Pancreas (tissue), 10 donors: ENCODE measurements at regions of chr7 and their contacts with region 1.

Region 1: GRCh38 chr7:48089046-48090003 is at the start of gene UPP1:
- DNase-seq: peak in 4 of 6 donors; percentile 57 to 95 (median 84)
- ATAC-seq: peak; percentile 41 to 88 (median 87)
- H3K4me3 ChIP-seq: peak within 1 kb of the TSS; percentile 42 to 90 (median 80)
- H3K27ac ChIP-seq: peak within 1 kb of the TSS; percentile 88 to 99 (median 96)
- H3K4me1 ChIP-seq: peaks cover 2 to 16% (median 6%) of the 10 kb centered on the region in 3 donors
- H3K27me3 ChIP-seq: no peaks in the 10 kb centered on the region
- CTCF ChIP-seq: no peak
- total RNA-seq, gene UPP1: 2.6 to 13.6 (median 7.4) TPM

Region 2: GRCh38 chr7:47833211-47833610 is 256.1 kb before region 1 on chr7:
- intact Hi-C with region 1: no loop called
- DNase-seq: no peak
- ATAC-seq: no peak
- H3K4me3 ChIP-seq: no peak overlapping the region
- H3K27ac ChIP-seq: no peak overlapping the region
- H3K4me1 ChIP-seq: no peaks in the 10 kb centered on the region
- H3K27me3 ChIP-seq: no peaks in the 10 kb centered on the region
- CTCF ChIP-seq: no peak

Region 3: DNA sequence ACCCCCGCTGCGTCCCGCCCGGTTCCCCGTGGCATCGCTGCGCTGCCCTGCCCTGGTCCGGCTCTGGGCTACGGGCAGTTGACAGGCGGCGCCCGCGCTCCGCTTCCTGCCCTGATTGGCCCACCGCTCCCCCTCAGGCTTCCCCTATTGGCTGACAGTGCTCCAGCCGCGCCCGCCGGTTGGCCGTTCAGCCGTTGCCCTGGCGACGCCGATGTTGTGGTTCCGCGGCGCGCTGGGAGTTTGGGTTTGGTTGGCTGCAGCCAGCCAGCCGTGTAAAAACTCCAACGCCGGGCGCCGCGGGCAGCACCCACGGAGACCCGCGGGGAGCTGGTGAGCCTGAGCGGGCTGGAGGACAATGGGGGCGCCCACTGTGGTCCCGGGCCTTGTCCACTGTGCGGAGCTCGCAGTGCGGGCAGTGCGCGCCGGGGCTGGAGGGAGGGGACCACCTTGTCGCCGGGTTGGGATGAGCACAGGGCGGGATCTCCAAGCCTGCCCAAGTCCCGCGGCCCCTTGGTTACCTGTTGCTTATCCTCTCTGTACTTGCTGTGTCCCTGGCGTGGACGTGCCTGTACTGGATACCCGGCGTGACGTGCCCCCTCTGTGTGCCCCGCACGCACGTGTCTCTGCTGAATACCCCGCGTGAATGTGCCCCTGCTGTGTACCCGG is 53.9 kb before region 1 on chr7 and contains the start of gene C7orf57:
- intact Hi-C with region 1: loop called in 1 of 3 experiments (anchors 10 kb)
- DNase-seq: peak; percentile 87 to 96 (median 92)
- ATAC-seq: peak; percentile 99 to 100 (median 100)
- H3K4me3 ChIP-seq: peak within 1 kb of the TSS; percentile 11 to 59 (median 35)
- H3K27ac ChIP-seq: no peak within 1 kb of the TSS
- H3K4me1 ChIP-seq: peaks cover 0 to 3% (median 0%) of the 10 kb centered on the region in 3 donors
- H3K27me3 ChIP-seq: peaks cover 0 to 3% (median 0%) of the 10 kb centered on the region in 4 donors
- CTCF ChIP-seq: no peak
- total RNA-seq, gene C7orf57: not detected

Region 4: GRCh38 chr7:48471196-48471595 is 381.9 kb after region 1 on chr7:
- intact Hi-C with region 1: no loop called
- DNase-seq: no peak
- ATAC-seq: no peak
- H3K4me3 ChIP-seq: no peak overlapping the region
- H3K27ac ChIP-seq: no peak overlapping the region
- H3K4me1 ChIP-seq: no peaks in the 10 kb centered on the region
- H3K27me3 ChIP-seq: no peaks in the 10 kb centered on the region
- CTCF ChIP-seq: no peak